Esophagus squamous epithelium (tissue), 5 donors: ENCODE measurements at regions of chr20 and their contacts with region 1.

Region 1: DNA sequence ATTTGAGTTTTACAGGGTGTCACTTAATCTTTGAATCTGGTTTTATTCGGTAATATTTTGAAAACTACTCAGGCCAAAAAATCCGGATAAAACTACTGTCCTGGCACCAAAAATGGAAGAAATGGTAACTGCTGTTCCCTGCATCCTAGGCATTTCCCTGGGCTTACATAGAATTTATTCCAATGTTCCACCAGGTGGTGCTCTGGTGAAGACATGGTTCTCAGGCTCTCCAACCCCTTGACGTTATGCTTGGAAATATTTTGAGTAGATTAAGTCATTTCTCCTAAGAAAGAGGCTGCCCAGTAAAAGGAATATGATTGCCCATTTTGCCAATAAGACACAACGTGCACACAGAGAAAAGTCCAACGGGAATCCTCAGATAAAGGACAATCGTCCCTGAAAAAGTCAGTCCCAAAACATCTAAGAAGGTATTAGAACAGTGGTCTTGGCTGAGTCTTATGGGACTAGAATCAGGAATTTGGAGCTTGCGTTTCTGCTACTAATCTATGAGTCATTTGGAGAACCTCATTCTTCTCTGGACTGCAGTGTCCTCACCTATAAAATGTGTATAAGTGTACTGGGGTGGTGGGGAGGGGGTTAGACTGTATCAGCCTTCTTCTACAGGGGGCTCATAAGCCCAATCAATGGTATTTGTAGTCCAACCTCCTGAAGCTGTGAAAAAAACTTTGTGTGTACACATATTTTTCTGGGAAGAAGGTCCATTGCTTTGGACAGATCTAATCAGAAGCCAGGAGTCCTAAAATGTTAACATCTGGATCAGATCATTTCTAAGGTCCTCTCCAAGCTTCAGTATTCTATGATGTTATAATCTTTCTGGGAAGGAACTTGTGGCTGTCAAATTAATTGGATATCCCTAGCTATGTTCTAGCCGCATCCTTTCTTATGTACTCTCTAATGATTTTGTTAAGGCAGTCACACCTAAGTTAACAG is 131.0 kb upstream of the BMP2 start:
- DNase-seq: no peak
- H3K4me3 ChIP-seq: no peak overlapping the region
- H3K27ac ChIP-seq: peak overlapping the region in 1 of 4 donors; percentile 25
- H3K4me1 ChIP-seq: peaks cover 0 to 19% (median 9%) of the 10 kb centered on the region in 3 donors
- H3K27me3 ChIP-seq: no peaks in the 10 kb centered on the region
- CTCF ChIP-seq: peak in 5 of 6 experiments; percentile 53 to 76 (median 58)
- POLR2A ChIP-seq: no peak

Region 2: GRCh38 chr20:6595704-6596103 is 40.8 kb before region 1 on chr20:
- intact Hi-C with region 1: no loop called
- DNase-seq: no peak
- H3K4me3 ChIP-seq: no peak overlapping the region
- H3K27ac ChIP-seq: peak overlapping the region in 3 of 4 donors; percentile 36 to 61 (median 50)
- H3K4me1 ChIP-seq: peaks cover 4 to 38% (median 7%) of the 10 kb centered on the region in 3 donors
- H3K27me3 ChIP-seq: no peaks in the 10 kb centered on the region
- CTCF ChIP-seq: no peak
- POLR2A ChIP-seq: no peak

Region 3: GRCh38 chr20:6735942-6736845 is 99.7 kb after region 1 on chr20:
- intact Hi-C with region 1: no loop called
- DNase-seq: no peak
- H3K4me3 ChIP-seq: no peak overlapping the region
- H3K27ac ChIP-seq: peak overlapping the region in 3 of 4 donors; percentile 21 to 47 (median 23)
- H3K4me1 ChIP-seq: no peaks in the 10 kb centered on the region
- H3K27me3 ChIP-seq: no peaks in the 10 kb centered on the region
- CTCF ChIP-seq: no peak
- POLR2A ChIP-seq: no peak

Region 4: DNA sequence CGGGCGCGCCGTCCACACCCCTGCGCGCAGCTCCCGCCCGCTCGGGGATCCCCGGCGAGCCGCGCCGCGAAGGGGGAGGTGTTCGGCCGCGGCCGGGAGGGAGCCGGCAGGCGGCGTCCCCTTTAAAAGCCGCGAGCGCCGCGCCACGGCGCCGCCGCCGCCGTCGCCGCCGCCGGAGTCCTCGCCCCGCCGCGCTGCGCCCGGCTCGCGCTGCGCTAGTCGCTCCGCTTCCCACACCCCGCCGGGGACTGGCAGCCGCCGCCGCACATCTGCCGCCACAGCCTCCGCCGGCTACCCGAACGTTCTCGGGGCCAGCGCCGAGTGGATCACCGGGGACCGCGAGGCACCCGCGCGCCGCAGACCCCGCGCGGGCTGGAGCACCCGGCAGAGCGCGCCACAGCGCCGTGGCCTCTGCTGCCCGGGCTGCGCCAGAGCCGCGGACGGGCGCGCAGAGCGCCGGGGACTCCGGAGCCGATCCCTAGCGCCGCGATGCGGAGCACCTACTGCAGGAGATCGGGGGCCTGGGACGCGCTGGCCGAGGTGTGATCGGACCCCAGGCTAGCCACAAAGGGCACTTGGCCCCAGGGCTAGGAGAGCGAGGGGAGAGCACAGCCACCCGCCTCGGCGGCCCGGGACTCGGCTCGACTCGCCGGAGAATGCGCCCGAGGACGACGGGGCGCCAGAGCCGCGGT is 131.2 kb after region 1 on chr20 and contains the start of gene BMP2:
- intact Hi-C with region 1: loop called (anchors 10 kb)
- DNase-seq: no peak
- H3K4me3 ChIP-seq: peak within 1 kb of the TSS; percentile 59 to 89 (median 72)
- H3K27ac ChIP-seq: peak within 1 kb of the TSS; percentile 78 to 86 (median 82)
- H3K4me1 ChIP-seq: peaks cover 0 to 56% (median 11%) of the 10 kb centered on the region in 3 donors
- H3K27me3 ChIP-seq: peaks cover 0 to 32% (median 0%) of the 10 kb centered on the region in 4 donors
- CTCF ChIP-seq: peak in 1 of 6 experiments; percentile 15
- POLR2A ChIP-seq: peak in 2 of 4 donors; percentile 36 to 49
- total RNA-seq, gene BMP2: 3.5 to 7.6 (median 5.4) TPM

Region 5: GRCh38 chr20:6819605-6820004 is 183.1 kb after region 1 on chr20:
- intact Hi-C with region 1: loop called (anchors 5 kb)
- DNase-seq: no peak
- H3K4me3 ChIP-seq: no peak overlapping the region
- H3K27ac ChIP-seq: no peak overlapping the region
- H3K4me1 ChIP-seq: no peaks in the 10 kb centered on the region
- H3K27me3 ChIP-seq: no peaks in the 10 kb centered on the region
- CTCF ChIP-seq: peak in 4 of 6 experiments; percentile 25 to 55 (median 29)
- POLR2A ChIP-seq: no peak